ENCODE measurements at regions of chr14 and their contacts with region 1.

Region 1: GRCh38 chr14:49585803-49586672 is at the start of gene RPS29:
- DNase-seq: peak; percentile 99
- H3K4me3 Mint-ChIP-seq: peak within 1 kb of the TSS; percentile 89
- H3K27ac Mint-ChIP-seq: peak within 1 kb of the TSS; percentile 99
- H3K4me1 Mint-ChIP-seq: peaks cover 35% of the 10 kb centered on the region
- H3K27me3 Mint-ChIP-seq: peaks cover 3% of the 10 kb centered on the region
- total RNA-seq, gene RPS29: 1,960 and 2,033 TPM in 2 replicates

Region 2: GRCh38 chr14:49461529-49462401 is 124.3 kb before region 1 on chr14:
- intact Hi-C with region 1: loop called (anchors 5 kb)
- DNase-seq: peak; percentile 88
- H3K4me3 Mint-ChIP-seq: no peak overlapping the region
- H3K27ac Mint-ChIP-seq: no peak overlapping the region
- H3K4me1 Mint-ChIP-seq: no peaks in the 10 kb centered on the region
- H3K27me3 Mint-ChIP-seq: peaks cover 16% of the 10 kb centered on the region

Region 3: GRCh38 chr14:49598485-49599300 is 12.7 kb after region 1 on chr14 and contains the start of gene LRR1:
- intact Hi-C with region 1: loop called (anchors 1 kb)
- DNase-seq: peak; percentile 97
- H3K4me3 Mint-ChIP-seq: peak within 1 kb of the TSS; percentile 96
- H3K27ac Mint-ChIP-seq: peak within 1 kb of the TSS; percentile 94
- H3K4me1 Mint-ChIP-seq: peaks cover 25% of the 10 kb centered on the region
- H3K27me3 Mint-ChIP-seq: no peaks in the 10 kb centered on the region
- total RNA-seq, gene LRR1: 47.7 and 50.4 TPM in 2 replicates

Region 4: DNA sequence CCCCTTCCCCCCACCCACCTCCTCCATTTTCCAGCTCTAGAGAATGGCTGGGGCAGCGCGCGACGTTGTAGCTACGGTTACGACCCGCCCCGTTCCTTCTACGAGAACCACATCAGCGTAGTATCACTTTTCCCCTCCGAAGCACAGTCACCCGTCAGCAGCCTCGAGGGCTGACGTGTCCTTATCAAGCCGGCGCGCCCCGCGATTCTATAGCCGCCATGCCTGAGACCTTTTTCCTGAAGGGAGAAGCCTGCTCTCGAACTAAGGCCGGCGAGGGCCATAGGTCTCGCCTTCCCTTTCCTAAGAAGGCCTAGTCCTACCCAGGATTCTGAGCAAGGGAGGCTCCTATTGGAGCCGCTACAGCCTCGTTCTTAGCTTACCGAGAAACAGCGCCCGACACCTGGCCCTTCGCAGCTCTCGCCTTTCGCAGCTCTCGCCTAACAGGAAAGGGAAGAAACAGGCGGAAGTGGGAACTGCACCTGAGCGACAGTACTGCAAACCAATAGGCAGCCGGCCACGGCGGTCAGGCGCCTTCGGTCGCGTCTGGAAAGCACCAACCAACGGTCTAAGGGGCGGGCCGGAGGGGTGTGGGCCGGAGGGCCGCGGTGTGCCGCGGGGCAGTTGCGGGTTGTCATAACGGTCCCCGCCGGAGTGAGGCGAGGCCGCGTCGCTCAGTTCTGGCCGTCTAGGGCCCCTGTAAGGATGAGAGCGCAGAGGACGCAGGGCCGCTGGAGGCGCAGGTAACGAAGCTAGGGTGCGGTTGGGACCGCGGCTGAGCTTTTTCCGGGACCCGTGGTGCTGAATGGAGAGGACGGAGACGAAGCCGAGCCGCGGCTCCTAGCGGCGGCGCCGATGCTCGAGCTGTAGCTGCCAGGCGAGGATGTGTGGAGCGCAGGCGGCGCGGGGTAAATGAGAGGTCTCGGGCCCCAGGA is 34.4 kb after region 1 on chr14 and contains the starts of genes MGAT2 and RPL36AL:
- intact Hi-C with region 1: loop called (anchors 1 kb)
- DNase-seq: peak; percentile 99
- H3K4me3 Mint-ChIP-seq: peak within 1 kb of the TSS; percentile 96
- H3K27ac Mint-ChIP-seq: peak within 1 kb of the TSS; percentile 96
- H3K4me1 Mint-ChIP-seq: peaks cover 36% of the 10 kb centered on the region
- H3K27me3 Mint-ChIP-seq: no peaks in the 10 kb centered on the region
- total RNA-seq, gene MGAT2: 45.6 and 48.5 TPM in 2 replicates
- total RNA-seq, gene RPL36AL: 221 and 229 TPM in 2 replicates

Region 5: GRCh38 chr14:50532502-50533240 is 946.6 kb after region 1 on chr14 and contains the start of gene MAP4K5:
- intact Hi-C with region 1: loop called (anchors 5 kb)
- DNase-seq: peak; percentile 96
- H3K4me3 Mint-ChIP-seq: peak within 1 kb of the TSS; percentile 89
- H3K27ac Mint-ChIP-seq: peak within 1 kb of the TSS; percentile 75
- H3K4me1 Mint-ChIP-seq: peaks cover 38% of the 10 kb centered on the region
- H3K27me3 Mint-ChIP-seq: peaks cover 17% of the 10 kb centered on the region
- total RNA-seq, gene MAP4K5: 24.3 and 24.6 TPM in 2 replicates

Region 6: DNA sequence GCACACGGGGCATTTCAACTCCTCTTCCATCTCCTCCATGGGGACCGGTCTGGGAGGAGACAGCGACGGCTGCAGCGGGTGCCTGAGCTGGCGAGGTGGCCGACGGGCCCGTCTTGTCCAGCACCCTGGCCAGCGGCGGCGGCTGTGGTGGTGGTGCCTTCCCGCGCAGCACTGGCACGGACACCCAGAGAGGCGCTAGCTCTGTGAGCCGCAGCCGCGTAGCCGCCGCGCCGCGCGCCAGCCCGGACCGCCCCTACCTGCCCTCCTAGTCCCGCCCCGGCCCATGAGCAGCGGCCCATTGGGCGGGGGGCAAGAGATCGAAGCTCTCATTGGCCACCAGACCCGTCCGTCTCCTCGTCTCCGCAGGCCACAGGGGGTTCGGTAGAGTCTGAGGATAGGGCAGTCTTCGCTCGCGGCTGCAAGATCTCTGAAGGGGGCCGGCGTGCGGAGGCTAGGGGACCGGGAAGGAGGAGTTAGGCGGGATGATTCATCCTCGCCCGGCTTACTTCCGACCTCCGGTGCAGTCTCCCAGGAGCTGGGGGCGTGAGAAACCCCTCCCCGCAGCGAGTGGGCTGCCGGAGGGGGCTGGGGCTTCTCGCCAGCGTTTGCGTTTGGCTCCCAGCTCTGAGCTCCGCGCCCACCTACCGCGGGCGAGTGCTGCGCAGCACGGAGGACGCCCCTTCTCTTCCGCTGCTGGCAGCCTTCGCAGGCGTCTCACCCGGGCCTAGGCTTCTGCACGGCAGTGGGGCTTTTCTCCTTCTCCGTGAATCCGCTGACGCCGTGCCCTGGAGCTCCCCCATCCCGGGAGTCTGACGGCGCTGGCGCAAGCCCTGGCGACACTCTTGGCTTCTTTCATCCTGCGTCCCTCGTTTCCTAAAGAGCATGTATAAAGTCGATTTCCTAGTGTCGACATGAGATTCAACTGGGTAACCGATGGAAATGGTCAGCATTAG is 1509.1 kb after region 1 on chr14 and contains the start of gene TRIM9:
- intact Hi-C with region 1: loop called (anchors 10 kb)
- DNase-seq: peak; percentile 97
- H3K4me3 Mint-ChIP-seq: peak within 1 kb of the TSS; percentile 91
- H3K27ac Mint-ChIP-seq: peak within 1 kb of the TSS; percentile 51
- H3K4me1 Mint-ChIP-seq: peaks cover 15% of the 10 kb centered on the region
- H3K27me3 Mint-ChIP-seq: peaks cover 55% of the 10 kb centered on the region
- total RNA-seq, gene TRIM9: 0.47 and 0.52 TPM in 2 replicates